Head of caudate nucleus (tissue), 42 donors: ENCODE measurements at regions of chr17 and their contacts with region 1.

Region 1: GRCh38 chr17:11779892-11780291 is 181.6 kb downstream of the DNAH9 start:
- DNase-seq: no peak

Region 2: DNA sequence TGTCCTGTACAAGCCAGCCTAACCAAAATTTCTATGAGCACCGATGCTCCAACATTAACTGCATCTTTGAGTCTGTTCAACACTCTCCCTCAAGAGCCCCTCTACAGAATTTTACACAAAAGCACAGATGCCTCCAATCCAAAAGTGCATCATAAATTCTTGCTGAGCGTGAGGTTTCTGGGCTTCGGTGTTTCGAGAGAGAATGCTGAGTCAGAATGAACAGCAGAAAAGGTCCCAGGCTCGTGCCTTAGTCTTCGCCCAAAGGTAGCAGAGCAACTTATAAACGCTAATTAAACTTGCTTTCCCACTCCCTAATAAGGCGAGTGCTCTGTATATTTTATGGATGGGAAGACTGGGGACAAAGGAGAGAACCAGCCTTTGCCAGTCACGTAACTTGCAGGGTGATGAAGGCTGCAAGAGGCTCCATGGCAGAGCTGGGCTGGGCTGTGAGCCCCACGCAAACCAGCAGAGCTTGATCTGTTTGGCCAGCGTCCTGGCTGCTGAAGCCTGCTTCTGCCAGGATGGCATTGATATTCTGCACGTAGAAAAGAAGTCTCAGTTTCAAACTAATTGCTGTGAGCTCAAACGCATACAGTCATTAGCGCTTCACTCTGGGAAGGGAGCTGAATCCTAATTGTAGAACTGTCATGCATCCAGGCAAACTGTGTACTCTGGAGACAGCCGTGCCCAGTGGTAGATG is 43.1 kb before region 1 on chr17:
- intact Hi-C with region 1: no loop called
- DNase-seq: peak in 14 of 42 donors; percentile 13 to 54 (median 22)

Region 3: DNA sequence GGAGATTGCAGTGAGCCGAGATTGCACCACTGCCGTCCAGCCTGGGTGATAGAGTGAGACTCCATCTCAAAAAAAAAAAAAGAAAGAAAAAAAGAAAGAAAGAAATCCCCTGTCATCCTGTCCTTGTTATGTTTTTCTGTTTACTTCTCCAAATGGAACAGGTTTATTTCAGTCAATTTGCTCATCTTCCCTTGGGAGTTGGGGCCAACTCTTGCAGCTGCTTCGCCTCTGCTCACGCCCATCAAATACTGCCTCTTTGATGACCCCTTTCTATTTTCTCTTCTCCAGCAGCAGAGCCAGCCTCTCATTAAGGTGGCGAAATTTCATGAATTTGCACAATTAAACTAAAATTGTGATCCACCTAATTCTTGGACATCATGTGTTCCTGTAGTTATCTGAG is 44.0 kb after region 1 on chr17:
- intact Hi-C with region 1: loop called (anchors 10 kb)
- DNase-seq: no peak

Region 4: DNA sequence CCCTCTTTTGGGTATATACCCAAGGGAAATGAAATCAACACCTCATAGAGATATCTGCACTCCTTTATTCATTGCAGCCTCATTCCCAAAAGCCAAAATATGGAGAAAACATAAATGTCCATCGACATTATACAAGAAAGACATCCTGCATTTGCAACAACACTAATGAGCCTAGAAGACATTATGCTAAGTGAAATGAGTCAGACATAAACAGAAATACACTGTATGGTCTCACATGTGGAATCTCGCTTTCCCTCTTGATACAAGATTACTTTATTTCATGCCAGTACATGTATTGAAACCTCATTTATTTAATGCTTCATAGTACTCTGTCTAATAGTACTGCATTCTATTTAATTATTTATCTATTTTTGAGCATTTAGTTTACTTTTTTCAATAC is 60.2 kb after region 1 on chr17:
- intact Hi-C with region 1: no loop called
- DNase-seq: no peak

Region 5: GRCh38 chr17:11925262-11926021 is 145.6 kb after region 1 on chr17:
- intact Hi-C with region 1: no loop called
- DNase-seq: no peak